ENCODE measurements at regions of chr17 and their contacts with region 1.

Region 1: GRCh38 chr17:54172096-54172984 is 349.6 kb downstream of the KIF2B start:
- DNase-seq: peak; percentile 16
- H3K4me3 Mint-ChIP-seq: no peak overlapping the region
- H3K27ac Mint-ChIP-seq: no peak overlapping the region
- H3K4me1 Mint-ChIP-seq: peaks cover 6% of the 10 kb centered on the region
- H3K27me3 Mint-ChIP-seq: no peaks in the 10 kb centered on the region
- CTCF ChIP-seq: peak; percentile 77

Region 2: DNA sequence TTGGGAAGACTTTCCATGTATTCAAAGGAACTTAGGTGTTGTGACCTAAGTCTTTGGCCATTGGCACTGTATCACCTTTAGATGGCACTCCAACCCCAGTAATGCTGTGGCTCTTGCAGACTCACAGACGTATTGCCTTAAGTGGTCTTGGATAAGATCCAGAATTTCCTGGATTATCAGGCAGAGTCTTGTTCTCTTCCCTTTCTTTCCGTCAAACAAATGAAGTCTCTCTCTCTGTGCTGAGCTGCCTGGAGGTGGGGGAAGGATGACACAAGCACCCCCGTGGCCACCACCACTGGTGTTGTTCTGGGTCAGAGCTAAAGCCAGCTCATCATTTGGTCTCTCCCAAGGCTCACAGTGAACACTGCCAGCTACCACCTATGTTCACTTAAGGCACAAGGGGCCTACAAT is 1139.5 kb before region 1 on chr17:
- CTCF ChIA-PET with region 1: interaction called, 6 read pairs
- POLR2A ChIA-PET with region 1: no interaction called
- intact Hi-C with region 1: loop called (anchors 1 kb)
- DNase-seq: peak; percentile 65
- H3K4me3 Mint-ChIP-seq: no peak overlapping the region
- H3K27ac Mint-ChIP-seq: no peak overlapping the region
- H3K4me1 Mint-ChIP-seq: no peaks in the 10 kb centered on the region
- H3K27me3 Mint-ChIP-seq: peaks cover 59% of the 10 kb centered on the region
- CTCF ChIP-seq: peak; percentile 74

Region 3: DNA sequence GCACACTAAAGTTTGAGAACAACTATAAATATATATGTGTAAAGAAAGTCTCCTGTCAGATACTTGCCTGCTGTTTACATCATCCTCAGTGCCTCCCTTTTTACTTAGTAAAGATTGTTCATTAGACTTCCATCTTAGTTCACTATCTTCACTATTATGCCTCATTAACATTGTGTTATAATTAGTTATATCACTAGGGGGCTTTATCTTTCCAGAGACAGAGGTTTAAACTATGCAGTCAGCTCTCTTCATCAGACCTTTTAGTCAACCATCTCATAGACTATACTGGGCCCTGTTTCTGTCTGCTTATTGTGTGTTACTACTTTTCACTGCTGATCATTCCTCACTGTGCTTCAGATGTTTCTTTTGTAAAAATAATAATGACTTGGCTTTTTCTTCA is 980.5 kb before region 1 on chr17:
- CTCF ChIA-PET with region 1: no interaction called
- POLR2A ChIA-PET with region 1: no interaction called
- intact Hi-C with region 1: loop called (anchors 2 kb)
- DNase-seq: peak; percentile 2
- H3K4me3 Mint-ChIP-seq: no peak overlapping the region
- H3K27ac Mint-ChIP-seq: no peak overlapping the region
- H3K4me1 Mint-ChIP-seq: peaks cover 14% of the 10 kb centered on the region
- H3K27me3 Mint-ChIP-seq: peaks cover 8% of the 10 kb centered on the region
- CTCF ChIP-seq: no peak

Region 4: GRCh38 chr17:53516636-53517035 is 655.7 kb before region 1 on chr17:
- CTCF ChIA-PET with region 1: no interaction called
- POLR2A ChIA-PET with region 1: no interaction called
- intact Hi-C with region 1: loop called (anchors 2 kb)
- DNase-seq: peak; percentile 35
- H3K4me3 Mint-ChIP-seq: no peak overlapping the region
- H3K27ac Mint-ChIP-seq: no peak overlapping the region
- H3K4me1 Mint-ChIP-seq: no peaks in the 10 kb centered on the region
- H3K27me3 Mint-ChIP-seq: no peaks in the 10 kb centered on the region
- CTCF ChIP-seq: peak; percentile 7

Region 5: DNA sequence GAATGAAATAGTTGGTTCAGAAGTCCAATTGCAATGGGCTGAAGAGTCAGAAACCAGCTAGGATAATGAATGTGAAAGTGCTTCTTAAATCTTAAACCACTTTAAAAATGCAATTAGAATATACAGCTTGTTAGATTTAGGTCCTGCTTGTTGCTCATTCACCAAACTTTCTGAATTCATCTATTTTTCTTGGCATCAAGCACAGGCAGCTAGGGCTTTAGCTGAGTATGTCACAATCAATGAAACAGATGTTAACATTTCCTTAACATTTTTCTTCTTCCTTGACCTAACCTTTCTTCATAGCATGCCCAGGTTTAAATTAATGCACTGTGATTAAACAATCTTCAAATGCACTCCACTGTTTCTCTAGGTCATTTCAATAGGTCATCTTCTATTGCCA is 335.2 kb before region 1 on chr17:
- CTCF ChIA-PET with region 1: no interaction called
- POLR2A ChIA-PET with region 1: no interaction called
- intact Hi-C with region 1: loop called (anchors 2 kb)
- DNase-seq: peak; percentile 2
- H3K4me3 Mint-ChIP-seq: no peak overlapping the region
- H3K27ac Mint-ChIP-seq: no peak overlapping the region
- H3K4me1 Mint-ChIP-seq: peaks cover 22% of the 10 kb centered on the region
- H3K27me3 Mint-ChIP-seq: no peaks in the 10 kb centered on the region
- CTCF ChIP-seq: no peak

Region 6: GRCh38 chr17:54194268-54194667 is 21.9 kb after region 1 on chr17:
- CTCF ChIA-PET with region 1: no interaction called
- POLR2A ChIA-PET with region 1: no interaction called
- intact Hi-C with region 1: no loop called
- DNase-seq: no peak
- H3K4me3 Mint-ChIP-seq: no peak overlapping the region
- H3K27ac Mint-ChIP-seq: no peak overlapping the region
- H3K4me1 Mint-ChIP-seq: peaks cover 10% of the 10 kb centered on the region
- H3K27me3 Mint-ChIP-seq: no peaks in the 10 kb centered on the region
- CTCF ChIP-seq: no peak

Region 7: GRCh38 chr17:54235571-54235970 is 63.2 kb after region 1 on chr17:
- CTCF ChIA-PET with region 1: no interaction called
- POLR2A ChIA-PET with region 1: no interaction called
- intact Hi-C with region 1: no loop called
- DNase-seq: no peak
- H3K4me3 Mint-ChIP-seq: no peak overlapping the region
- H3K27ac Mint-ChIP-seq: no peak overlapping the region
- H3K4me1 Mint-ChIP-seq: no peaks in the 10 kb centered on the region
- H3K27me3 Mint-ChIP-seq: no peaks in the 10 kb centered on the region
- CTCF ChIP-seq: no peak

Region 8: DNA sequence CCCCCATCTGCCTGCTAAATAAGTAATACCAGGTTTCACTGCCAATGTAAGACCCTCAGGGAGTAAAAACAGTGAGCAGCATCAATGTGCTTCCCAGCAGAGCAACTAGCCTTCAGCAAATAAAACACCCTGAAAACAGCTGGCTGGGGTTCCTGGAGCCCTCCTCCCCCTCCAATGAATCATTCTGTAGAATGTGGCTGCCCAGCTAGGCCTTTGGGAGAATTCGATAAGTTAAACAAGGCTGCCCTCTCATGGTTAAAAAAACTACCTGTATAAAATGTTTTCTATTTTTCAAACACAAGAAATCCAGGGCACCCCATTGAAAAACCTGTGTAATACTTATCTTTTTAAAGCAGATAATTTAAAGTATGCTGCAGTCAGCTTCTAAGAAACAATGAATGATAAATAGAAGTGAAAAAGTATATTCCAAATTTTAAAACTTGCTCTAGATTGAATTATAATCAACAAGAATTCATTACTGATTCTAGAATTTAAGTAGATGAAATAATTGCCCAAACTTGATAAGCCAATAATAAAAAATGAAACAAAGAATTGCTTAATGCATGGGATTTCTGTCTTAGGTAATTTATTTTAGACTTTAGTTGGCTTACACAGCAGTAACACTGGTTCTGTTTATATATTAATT is 719.0 kb after region 1 on chr17:
- CTCF ChIA-PET with region 1: no interaction called
- POLR2A ChIA-PET with region 1: no interaction called
- intact Hi-C with region 1: loop called (anchors 1 kb)
- DNase-seq: peak; percentile 70
- H3K4me3 Mint-ChIP-seq: no peak overlapping the region
- H3K27ac Mint-ChIP-seq: no peak overlapping the region
- H3K4me1 Mint-ChIP-seq: peaks cover 5% of the 10 kb centered on the region
- H3K27me3 Mint-ChIP-seq: no peaks in the 10 kb centered on the region
- CTCF ChIP-seq: peak; percentile 52

Measured in MCF 10A (cell line).